Activated CD4-positive, alpha-beta memory T cell treated with anti-CD3 and anti-CD28 coated beads for 36 hours (primary cell): ENCODE measurements at regions of chr3 and their contacts with region 1.

Region 1: DNA sequence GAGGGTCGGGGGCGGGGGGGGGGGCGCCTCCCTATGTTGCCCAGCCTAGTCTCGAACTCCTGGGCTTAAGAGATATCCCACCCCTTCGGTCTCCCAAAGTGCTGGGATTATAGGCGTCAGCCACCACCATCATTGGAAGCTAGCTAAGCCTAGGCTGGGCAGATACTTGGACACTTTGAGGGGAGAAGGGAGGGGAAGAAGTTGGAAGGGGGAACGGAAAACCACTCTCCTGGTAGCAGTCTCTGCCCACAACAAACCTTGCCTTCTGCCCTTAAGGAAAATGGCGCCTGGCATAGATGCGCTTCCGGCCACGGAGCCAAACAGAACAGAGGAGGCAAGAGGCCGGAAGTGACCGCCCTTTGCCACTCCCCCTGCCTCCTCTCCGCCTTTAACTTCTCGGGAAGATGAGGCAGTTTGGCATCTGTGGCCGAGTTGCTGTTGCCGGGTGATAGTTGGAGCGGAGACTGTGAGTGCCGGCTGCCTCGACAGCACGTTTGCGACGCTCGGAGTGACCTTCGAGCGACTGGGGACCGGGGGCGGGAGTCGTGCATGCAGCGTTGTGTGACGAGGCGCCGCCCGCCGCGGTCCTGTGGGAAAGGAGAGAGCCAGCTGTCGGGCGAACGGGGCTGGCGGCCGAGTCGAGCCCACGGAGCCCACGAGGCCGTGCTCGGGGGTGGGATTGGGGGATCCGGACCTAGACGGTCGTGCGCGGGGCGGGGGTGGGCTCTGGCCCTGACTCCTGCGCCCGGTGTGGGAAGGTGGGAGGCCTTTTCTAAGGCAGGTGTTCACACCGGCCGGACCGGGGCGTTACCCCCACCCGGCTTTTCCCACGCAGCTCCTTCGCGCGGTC is at the start of gene MFN1:
- DNase-seq: peak; percentile 94
- H3K4me3 Mint-ChIP-seq: peak within 1 kb of the TSS; percentile 98
- H3K27ac Mint-ChIP-seq: peak within 1 kb of the TSS; percentile 94
- H3K4me1 Mint-ChIP-seq: peaks cover 23% of the 10 kb centered on the region
- H3K27me3 Mint-ChIP-seq: no peaks in the 10 kb centered on the region
- total RNA-seq, gene MFN1: 31.1 to 31.3 TPM

Region 2: GRCh38 chr3:179236669-179237301 is 110.8 kb before region 1 on chr3:
- CTCF ChIA-PET with region 1: no interaction called
- POLR2A ChIA-PET with region 1: no interaction called
- intact Hi-C with region 1: no loop called
- DNase-seq: no peak
- H3K4me3 Mint-ChIP-seq: no peak overlapping the region
- H3K27ac Mint-ChIP-seq: no peak overlapping the region
- H3K4me1 Mint-ChIP-seq: peaks cover 5% of the 10 kb centered on the region
- H3K27me3 Mint-ChIP-seq: no peaks in the 10 kb centered on the region

Region 3: DNA sequence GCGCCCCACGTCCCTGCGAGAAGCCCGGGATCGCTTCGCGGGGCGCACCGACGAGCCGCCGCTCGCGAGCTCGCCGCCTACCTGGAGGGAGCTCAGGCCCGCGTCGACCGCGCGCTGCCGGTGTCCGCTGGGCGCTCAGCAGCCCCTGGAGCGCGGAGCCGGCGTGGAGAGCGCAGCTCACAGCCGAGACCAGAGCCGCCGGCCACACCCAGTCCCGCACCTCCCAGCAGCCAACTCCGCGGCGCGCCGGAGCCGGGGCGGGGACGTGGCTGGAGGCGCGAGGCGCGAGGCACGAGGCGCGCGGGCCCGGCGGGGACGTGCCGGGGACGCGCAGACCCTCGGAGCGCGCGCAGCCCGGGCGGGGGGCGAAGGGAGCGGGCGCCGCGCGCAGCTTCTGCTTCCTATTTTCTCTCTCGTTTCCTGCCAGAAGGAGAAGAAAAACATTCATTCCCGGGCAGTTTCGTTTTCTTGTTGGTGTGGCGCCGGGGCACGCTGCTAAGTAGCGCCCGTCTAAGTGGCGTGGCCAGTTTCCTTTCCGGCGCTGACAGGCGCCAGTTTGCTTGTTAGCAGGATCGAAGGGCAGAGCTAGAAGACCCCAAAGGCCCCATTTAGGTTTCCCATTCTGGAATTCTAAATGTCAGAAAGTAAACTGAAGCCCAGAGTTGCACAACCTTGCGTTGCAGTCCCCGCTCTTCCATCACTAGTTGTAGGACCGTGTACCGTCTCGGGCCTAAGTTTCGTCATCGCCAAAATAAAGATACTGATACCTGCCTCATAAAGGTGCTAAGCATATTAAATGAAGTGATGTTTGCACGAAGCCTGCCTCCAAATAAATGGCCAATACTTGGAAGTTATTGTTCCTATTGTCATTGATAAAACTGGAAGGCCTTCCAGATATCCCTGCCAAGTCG is 104.0 kb after region 1 on chr3 and contains the start of gene GNB4:
- CTCF ChIA-PET with region 1: no interaction called
- POLR2A ChIA-PET with region 1: no interaction called
- intact Hi-C with region 1: loop called (anchors 1 kb)
- DNase-seq: peak; percentile 56
- H3K4me3 Mint-ChIP-seq: peak within 1 kb of the TSS; percentile 68
- H3K27ac Mint-ChIP-seq: no peak within 1 kb of the TSS
- H3K4me1 Mint-ChIP-seq: peaks cover 14% of the 10 kb centered on the region
- H3K27me3 Mint-ChIP-seq: peaks cover 58% of the 10 kb centered on the region
- total RNA-seq, gene GNB4: 0.51 to 0.59 TPM

Region 4: GRCh38 chr3:179604321-179605078 is 256.9 kb after region 1 on chr3 and contains the starts of genes MRPL47 and NDUFB5:
- CTCF ChIA-PET with region 1: no interaction called
- POLR2A ChIA-PET with region 1: no interaction called
- intact Hi-C with region 1: loop called (anchors 1 kb)
- DNase-seq: peak; percentile 96
- H3K4me3 Mint-ChIP-seq: peak within 1 kb of the TSS; percentile 99
- H3K27ac Mint-ChIP-seq: peak within 1 kb of the TSS; percentile 98
- H3K4me1 Mint-ChIP-seq: peaks cover 40% of the 10 kb centered on the region
- H3K27me3 Mint-ChIP-seq: no peaks in the 10 kb centered on the region
- total RNA-seq, gene MRPL47: 51.4 to 54.0 TPM
- total RNA-seq, gene NDUFB5: 133 to 147 TPM